ENCODE measurements at regions of chr11 and their contacts with region 1.

Region 1: GRCh38 chr11:13955971-13956421 is 6.5 kb upstream of the SPON1 start:
- DNase-seq: peak; percentile 72
- H3K4me3 Mint-ChIP-seq: no peak overlapping the region
- H3K27ac Mint-ChIP-seq: no peak overlapping the region
- H3K4me1 Mint-ChIP-seq: no peaks in the 10 kb centered on the region
- H3K27me3 Mint-ChIP-seq: peaks cover 27% of the 10 kb centered on the region
- CTCF ChIP-seq: peak; percentile 82

Region 2: DNA sequence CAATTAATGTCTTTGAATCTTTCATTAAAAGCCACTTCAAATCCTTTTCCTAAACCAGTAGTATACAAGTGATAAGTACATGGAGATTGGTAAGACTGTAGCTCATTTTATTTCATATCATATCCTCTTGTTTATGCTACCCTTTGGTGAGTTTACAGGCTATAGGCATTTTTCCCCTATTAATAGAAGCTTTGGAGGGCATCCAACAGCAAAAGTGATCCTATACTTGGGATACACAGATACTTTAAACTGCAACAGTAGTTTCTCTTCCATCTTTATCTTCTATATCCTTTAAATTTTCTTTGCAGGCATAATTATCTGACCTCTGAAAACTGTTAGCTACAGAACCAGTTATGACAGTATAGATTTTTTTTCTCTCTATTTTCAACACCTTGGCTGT is 108.0 kb before region 1 on chr11:
- CTCF ChIA-PET with region 1: no interaction called
- POLR2A ChIA-PET with region 1: no interaction called
- intact Hi-C with region 1: no loop called
- DNase-seq: no peak
- H3K4me3 Mint-ChIP-seq: no peak overlapping the region
- H3K27ac Mint-ChIP-seq: no peak overlapping the region
- H3K4me1 Mint-ChIP-seq: peaks cover 6% of the 10 kb centered on the region
- H3K27me3 Mint-ChIP-seq: peaks cover 50% of the 10 kb centered on the region
- CTCF ChIP-seq: no peak

Region 3: GRCh38 chr11:13942983-13943382 is 13.0 kb before region 1 on chr11:
- CTCF ChIA-PET with region 1: interaction called, 65 read pairs
- POLR2A ChIA-PET with region 1: interaction called, 3 read pairs
- intact Hi-C with region 1: no loop called
- DNase-seq: peak; percentile 83
- H3K4me3 Mint-ChIP-seq: no peak overlapping the region
- H3K27ac Mint-ChIP-seq: no peak overlapping the region
- H3K4me1 Mint-ChIP-seq: peaks cover 22% of the 10 kb centered on the region
- H3K27me3 Mint-ChIP-seq: no peaks in the 10 kb centered on the region
- CTCF ChIP-seq: no peak

Region 4: DNA sequence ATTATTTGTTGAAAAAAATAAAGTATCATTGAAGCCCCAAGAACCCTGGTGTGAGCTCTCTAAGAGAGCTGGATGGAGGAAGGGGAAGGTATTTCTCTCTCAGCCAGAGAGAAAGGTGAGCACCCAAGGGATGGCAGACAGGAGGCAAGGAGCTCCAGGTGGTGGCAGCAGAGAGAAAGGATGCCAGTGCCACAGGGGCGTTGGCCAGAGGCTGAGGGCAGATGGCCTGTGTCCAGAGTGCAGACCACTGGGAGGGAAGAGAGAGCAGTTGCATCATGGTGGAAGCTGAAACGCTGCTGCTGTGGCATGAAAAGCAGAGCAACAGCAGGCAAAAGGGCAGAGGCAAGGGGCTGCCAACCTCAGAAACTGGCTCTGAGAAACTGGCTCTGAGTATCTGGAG is 15.0 kb after region 1 on chr11:
- CTCF ChIA-PET with region 1: interaction called, 62 read pairs
- POLR2A ChIA-PET with region 1: interaction called, 3 read pairs
- intact Hi-C with region 1: no loop called
- DNase-seq: peak; percentile 64
- H3K4me3 Mint-ChIP-seq: no peak overlapping the region
- H3K27ac Mint-ChIP-seq: no peak overlapping the region
- H3K4me1 Mint-ChIP-seq: no peaks in the 10 kb centered on the region
- H3K27me3 Mint-ChIP-seq: peaks cover 85% of the 10 kb centered on the region
- CTCF ChIP-seq: peak; percentile 50

Region 5: DNA sequence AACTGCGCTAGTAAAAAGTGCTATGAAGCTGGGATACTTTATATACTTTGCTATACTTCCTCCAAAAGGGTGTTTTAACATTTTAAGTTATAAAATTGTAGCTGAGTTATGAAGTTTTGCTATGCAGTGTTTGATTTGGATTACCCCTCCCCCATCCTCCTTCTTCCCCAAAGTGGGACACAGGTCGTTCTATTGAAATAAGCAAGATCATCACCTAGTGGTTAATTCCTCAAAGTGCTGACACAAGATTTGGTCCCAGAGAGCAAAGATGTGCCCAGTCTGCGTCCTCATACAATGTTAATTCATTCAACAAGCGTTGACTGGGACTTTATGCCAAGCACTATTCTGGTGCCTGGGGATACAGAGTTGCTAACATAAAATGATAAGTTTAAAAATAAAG is 85.0 kb after region 1 on chr11:
- CTCF ChIA-PET with region 1: interaction called, 4 read pairs
- POLR2A ChIA-PET with region 1: no interaction called
- intact Hi-C with region 1: loop called (anchors 1 kb)
- DNase-seq: peak; percentile 33
- H3K4me3 Mint-ChIP-seq: no peak overlapping the region
- H3K27ac Mint-ChIP-seq: no peak overlapping the region
- H3K4me1 Mint-ChIP-seq: no peaks in the 10 kb centered on the region
- H3K27me3 Mint-ChIP-seq: peaks cover 35% of the 10 kb centered on the region
- CTCF ChIP-seq: no peak

Region 6: GRCh38 chr11:14249121-14249963 is 293.3 kb after region 1 on chr11:
- CTCF ChIA-PET with region 1: interaction called, 62 read pairs
- POLR2A ChIA-PET with region 1: no interaction called
- intact Hi-C with region 1: loop called (anchors 1 kb)
- DNase-seq: peak; percentile 75
- H3K4me3 Mint-ChIP-seq: no peak overlapping the region
- H3K27ac Mint-ChIP-seq: no peak overlapping the region
- H3K4me1 Mint-ChIP-seq: no peaks in the 10 kb centered on the region
- H3K27me3 Mint-ChIP-seq: peaks cover 69% of the 10 kb centered on the region
- CTCF ChIP-seq: peak; percentile 88

Region 7: GRCh38 chr11:14907411-14908213 is 951.6 kb after region 1 on chr11:
- CTCF ChIA-PET with region 1: no interaction called
- POLR2A ChIA-PET with region 1: no interaction called
- intact Hi-C with region 1: no loop called
- DNase-seq: peak; percentile 70
- H3K4me3 Mint-ChIP-seq: peak overlapping the region; percentile 43
- H3K27ac Mint-ChIP-seq: no peak overlapping the region
- H3K4me1 Mint-ChIP-seq: peaks cover 16% of the 10 kb centered on the region
- H3K27me3 Mint-ChIP-seq: peaks cover 22% of the 10 kb centered on the region
- CTCF ChIP-seq: peak; percentile 90

Measured in MCF 10A (cell line).